ENCODE measurements at regions of chr5 and their contacts with region 1.

Region 1: GRCh38 chr5:81751009-81751835 is at the start of gene SSBP2:
- DNase-seq: peak; percentile 99 to 100
- H3K4me3 ChIP-seq: peak within 1 kb of the TSS; percentile 74
- CTCF ChIP-seq: no peak
- POLR2A ChIP-seq: no peak
- total RNA-seq, gene SSBP2: 45.3 to 83.1 (median 61.7) TPM

Region 2: GRCh38 chr5:81425569-81425968 is 325.7 kb before region 1 on chr5:
- intact Hi-C with region 1: loop called (anchors 10 kb)
- DNase-seq: no peak
- H3K4me3 ChIP-seq: no peak overlapping the region
- CTCF ChIP-seq: no peak
- POLR2A ChIP-seq: no peak

Region 3: DNA sequence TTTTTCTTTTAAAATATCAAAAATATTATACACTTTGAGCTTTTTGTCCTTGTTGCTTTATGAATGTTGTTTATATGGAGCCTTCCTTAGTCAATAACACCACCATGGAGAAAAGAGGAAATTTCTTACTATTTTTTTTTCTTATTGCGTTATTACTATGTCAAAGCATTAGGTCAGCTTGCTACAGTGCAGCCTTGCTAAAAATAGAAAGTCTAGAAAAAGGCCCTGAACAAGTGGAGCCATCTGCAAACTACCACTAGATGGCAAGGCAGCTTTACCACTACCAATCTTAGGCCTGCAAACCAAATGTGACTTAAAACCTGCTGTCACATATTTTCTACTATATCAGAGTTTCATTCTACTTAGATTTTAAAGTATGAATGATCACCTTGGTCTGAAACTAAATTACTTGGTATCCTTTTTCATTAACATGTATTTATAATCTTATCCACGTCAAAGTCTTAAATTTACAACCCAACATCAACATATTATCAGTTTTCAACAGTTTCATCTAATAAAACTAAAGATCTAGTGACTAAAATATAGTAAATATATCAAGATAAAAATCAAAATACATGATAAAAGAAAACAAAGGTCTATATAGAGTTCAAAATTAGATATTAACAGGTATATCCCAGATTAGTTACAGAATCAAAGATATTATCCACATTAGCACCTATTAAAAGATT is 244.2 kb before region 1 on chr5:
- intact Hi-C with region 1: loop called (anchors 10 kb)
- DNase-seq: peak in 1 of 2 donors; percentile 58
- H3K4me3 ChIP-seq: no peak overlapping the region
- CTCF ChIP-seq: peak in 1 of 3 donors; percentile 70
- POLR2A ChIP-seq: no peak

Region 4: GRCh38 chr5:81787474-81788242 is 36.4 kb after region 1 on chr5:
- intact Hi-C with region 1: loop called (anchors 5 kb)
- DNase-seq: peak; percentile 85 to 92
- H3K4me3 ChIP-seq: no peak overlapping the region
- CTCF ChIP-seq: no peak
- POLR2A ChIP-seq: no peak

Measured in lower leg skin (tissue), 4 donors.